ENCODE measurements at regions of chr9 and their contacts with region 1.

Region 1: DNA sequence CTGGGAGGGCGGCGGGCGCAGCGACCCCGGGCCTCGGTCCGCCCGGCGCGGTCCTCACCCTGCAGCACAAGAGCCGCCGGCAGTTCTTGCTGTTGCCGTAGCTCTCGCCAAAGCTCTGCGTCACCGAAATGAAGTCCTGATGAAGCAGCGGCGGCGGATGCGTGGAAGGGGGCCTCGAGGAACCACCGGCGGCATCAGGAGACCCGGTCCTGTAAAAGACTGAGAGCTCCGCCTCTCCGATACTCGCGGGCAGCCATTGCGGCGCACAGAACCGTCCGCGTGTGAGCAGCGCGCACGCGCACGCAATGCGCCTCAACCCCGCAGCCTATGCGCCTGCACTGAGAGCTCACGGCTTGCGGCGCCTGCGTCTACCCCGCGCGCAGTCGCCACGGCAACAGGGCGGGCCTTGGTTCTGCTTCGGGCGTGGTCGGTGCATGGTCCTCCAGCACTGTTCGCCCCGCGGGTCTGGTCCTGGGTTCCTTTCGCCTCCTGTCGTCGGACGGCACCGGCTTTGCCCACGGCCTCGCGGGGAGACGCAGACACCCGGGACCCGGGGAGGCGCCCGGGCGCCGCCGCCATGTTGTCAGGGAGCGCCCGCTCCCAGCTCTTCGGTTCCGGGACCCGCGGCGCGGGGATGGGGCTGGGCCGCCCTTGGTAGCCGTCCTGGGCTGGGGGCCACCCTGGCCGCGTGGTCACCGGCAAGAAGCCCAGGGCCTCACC is 9.3 kb upstream of the GRIN1 start:
- DNase-seq: peak; percentile 97
- H3K4me3 Mint-ChIP-seq: peak overlapping the region; percentile 86
- H3K27ac Mint-ChIP-seq: peak overlapping the region; percentile 79
- H3K4me1 Mint-ChIP-seq: peaks cover 22% of the 10 kb centered on the region
- H3K27me3 Mint-ChIP-seq: peaks cover 5% of the 10 kb centered on the region

Region 2: DNA sequence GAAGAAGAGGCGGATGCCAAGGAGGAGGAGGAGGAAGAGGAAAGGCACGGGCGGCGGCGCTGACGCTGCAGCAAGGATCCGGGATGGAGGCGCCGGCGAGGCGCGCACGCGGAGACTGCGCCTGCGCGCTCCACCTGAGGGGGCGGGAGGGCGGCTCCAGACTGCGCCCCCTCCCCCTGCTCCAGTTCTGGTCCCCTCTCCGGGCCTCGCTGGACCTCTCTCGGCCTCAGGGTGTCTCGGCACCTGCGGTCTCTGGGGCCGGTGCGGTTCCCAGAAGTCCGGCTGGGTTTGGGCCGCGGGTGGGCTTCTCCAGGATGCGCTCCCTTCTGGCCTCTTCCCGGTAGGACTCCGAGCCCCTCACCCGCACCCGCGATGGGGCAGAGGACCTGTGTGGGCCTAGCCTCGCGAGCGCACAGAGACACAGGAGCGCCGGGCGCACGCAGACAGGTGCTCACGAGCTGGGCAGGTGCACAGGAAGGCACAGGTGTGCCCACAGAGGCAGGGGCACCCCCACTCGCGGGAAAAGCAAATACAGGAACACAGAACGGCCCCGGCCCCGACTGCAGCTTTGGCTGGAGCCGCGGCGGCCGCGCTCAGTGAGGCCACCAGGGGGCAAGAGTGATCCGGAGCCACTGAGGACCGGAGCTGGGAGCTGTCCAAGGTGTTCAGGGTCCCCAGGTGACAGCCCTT is 83.4 kb before region 1 on chr9 and contains the start of gene NPDC1:
- intact Hi-C with region 1: loop called (anchors 5 kb)
- DNase-seq: peak; percentile 95
- H3K4me3 Mint-ChIP-seq: peak within 1 kb of the TSS; percentile 78
- H3K27ac Mint-ChIP-seq: peak within 1 kb of the TSS; percentile 15
- H3K4me1 Mint-ChIP-seq: peaks cover 7% of the 10 kb centered on the region
- H3K27me3 Mint-ChIP-seq: peaks cover 31% of the 10 kb centered on the region
- total RNA-seq, gene NPDC1: 58.1 and 59.4 TPM in 2 replicates

Region 3: DNA sequence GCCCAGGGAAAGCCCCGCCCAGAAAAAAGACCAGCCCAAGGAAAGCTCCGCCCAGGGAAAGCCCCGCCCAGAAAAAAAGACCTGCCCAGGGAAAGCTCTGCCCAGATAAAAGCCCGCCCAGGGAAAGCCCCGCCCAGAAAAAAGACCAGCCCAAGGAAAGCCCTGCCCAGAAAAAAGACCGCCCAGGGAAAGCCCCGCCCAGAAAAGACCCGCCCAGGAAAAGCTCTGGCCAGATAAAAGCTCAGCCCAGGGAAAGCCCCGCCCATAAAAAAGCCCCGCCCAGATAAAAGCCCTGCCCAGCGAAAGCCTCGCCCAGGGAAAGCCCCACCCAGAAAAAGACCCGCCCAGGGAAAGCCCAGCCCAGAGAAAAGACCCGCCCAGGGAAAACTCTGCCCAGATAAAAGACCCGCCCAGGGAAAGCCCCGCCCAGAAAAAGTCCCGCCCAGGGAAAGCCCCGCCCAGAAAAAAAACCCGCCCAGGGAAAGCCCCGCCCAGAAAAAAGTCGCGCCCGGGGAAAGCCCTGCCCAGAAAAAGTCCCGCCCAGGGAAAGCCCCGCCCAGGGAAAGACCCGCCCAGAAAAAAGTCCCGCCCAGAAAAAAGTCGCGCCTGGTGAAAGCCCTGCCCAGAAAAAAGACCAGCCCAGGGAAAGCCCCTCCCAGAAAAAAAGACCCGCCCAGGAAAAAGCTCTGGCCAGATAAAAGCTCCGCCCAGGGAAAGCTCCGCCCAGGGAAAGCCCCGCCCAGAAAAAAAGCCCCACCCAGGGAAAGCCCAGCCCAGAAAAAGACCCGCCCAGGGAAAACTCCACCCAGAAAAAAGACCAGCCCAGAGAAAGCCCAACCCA is 21.2 kb after region 1 on chr9:
- intact Hi-C with region 1: loop called (anchors 1 kb)
- DNase-seq: peak; percentile 86
- H3K4me3 Mint-ChIP-seq: no peak overlapping the region
- H3K27ac Mint-ChIP-seq: peak overlapping the region; percentile 58
- H3K4me1 Mint-ChIP-seq: peaks cover 2% of the 10 kb centered on the region
- H3K27me3 Mint-ChIP-seq: peaks cover 2% of the 10 kb centered on the region

Region 4: GRCh38 chr9:137188490-137189296 is 59.1 kb after region 1 on chr9 and contains the starts of genes ANAPC2 and SSNA1:
- intact Hi-C with region 1: loop called (anchors 1 kb)
- DNase-seq: peak; percentile 99
- H3K4me3 Mint-ChIP-seq: peak within 1 kb of the TSS; percentile 91
- H3K27ac Mint-ChIP-seq: peak within 1 kb of the TSS; percentile 94
- H3K4me1 Mint-ChIP-seq: peaks cover 22% of the 10 kb centered on the region
- H3K27me3 Mint-ChIP-seq: no peaks in the 10 kb centered on the region
- total RNA-seq, gene ANAPC2: 57.4 and 58.7 TPM in 2 replicates
- total RNA-seq, gene SSNA1: 95.1 and 95.8 TPM in 2 replicates

Region 5: DNA sequence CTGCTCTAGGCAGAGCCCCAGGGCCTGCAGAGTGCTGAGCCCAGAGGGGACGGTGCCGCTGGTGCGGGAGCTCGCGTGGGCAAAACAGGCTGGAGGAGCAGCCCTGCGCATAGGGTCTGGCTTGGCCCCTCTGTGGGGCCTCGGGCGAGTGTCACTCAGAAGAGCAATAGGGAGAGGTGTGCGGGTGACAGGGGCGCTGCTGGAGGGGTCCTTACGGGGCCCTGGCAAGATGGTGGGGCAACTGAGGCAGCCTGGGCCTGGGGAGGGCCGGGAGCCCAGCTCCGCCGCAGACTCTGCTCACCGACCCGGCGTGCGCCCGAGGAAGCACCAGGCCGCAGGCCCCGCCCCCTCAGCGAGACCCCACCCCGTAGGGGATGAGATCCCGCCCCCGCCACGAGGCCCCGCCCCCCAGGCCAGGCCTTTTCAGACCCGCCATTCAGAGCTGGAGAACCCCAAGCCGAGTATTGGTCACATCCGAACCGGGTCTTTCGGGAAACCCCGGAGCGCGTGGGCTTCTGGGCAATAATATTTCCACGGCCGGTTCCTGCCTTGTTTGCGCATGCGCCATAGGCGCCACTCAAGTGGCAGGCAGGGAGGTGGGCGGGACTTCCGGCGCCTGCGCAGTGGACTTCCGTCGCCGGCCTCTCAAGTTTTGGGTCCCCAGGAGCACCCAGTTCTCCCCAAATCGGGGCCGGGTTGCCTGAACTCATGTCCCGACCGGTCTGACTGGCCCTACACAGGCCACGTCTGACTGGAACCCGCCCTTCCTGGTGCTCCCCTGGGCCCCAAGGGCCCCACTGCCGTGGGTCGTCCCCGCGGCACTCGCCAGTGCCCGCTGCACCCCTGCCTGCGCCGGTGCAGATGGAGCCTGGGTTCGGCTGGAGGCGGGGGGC is 93.7 kb after region 1 on chr9:
- intact Hi-C with region 1: loop called (anchors 2 kb)
- DNase-seq: peak; percentile 99
- H3K4me3 Mint-ChIP-seq: peak overlapping the region; percentile 88
- H3K27ac Mint-ChIP-seq: peak overlapping the region; percentile 90
- H3K4me1 Mint-ChIP-seq: peaks cover 6% of the 10 kb centered on the region
- H3K27me3 Mint-ChIP-seq: peaks cover 2% of the 10 kb centered on the region